ENCODE measurements at regions of chr11 and their contacts with region 1.

Region 1: DNA sequence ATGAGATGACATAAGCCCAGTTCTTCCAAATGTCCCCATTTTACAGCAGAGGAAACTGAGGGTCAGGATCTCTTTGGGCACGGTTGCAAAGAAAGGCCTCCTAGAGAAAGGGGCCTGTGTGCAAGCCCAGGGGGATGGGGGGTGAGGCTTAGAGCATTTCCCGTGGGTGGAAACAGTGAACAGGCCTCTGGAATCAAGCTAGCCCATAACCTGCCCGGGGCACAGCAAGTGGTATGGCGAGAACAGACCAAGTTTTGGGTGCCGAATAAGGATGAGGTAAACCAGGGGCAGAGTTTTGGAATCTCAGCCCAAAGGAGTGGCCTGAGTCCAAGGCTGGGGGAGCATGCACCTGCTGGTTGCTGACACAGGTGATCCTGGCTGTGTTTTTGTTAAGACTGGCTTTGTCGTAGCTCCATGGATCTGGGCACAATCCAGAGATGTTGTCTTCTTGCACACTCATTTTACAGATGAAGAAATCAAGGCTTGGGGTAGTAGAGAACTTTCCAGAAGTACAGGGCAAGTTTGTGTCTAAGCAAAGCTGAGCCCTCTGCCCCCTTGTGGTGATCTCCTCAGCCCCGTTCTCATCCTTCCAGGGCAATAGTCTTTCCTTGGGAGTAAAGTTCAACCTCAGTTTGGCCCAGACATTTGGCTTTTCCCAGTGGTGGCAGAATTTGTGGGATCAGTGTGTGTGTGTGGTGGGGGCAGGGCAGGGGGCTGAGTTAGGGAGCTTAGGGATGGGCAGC is 53.5 kb upstream of the MYEOV start:
- DNase-seq: no peak
- H3K4me3 Mint-ChIP-seq: no peak overlapping the region
- H3K27ac Mint-ChIP-seq: peak overlapping the region; percentile 21
- H3K4me1 Mint-ChIP-seq: peaks cover 28% of the 10 kb centered on the region
- H3K27me3 Mint-ChIP-seq: peaks cover 10% of the 10 kb centered on the region

Region 2: GRCh38 chr11:69101115-69101791 is 139.2 kb before region 1 on chr11:
- intact Hi-C with region 1: loop called (anchors 1 kb)
- DNase-seq: peak; percentile 92
- H3K4me3 Mint-ChIP-seq: no peak overlapping the region
- H3K27ac Mint-ChIP-seq: no peak overlapping the region
- H3K4me1 Mint-ChIP-seq: peaks cover 3% of the 10 kb centered on the region
- H3K27me3 Mint-ChIP-seq: no peaks in the 10 kb centered on the region

Region 3: DNA sequence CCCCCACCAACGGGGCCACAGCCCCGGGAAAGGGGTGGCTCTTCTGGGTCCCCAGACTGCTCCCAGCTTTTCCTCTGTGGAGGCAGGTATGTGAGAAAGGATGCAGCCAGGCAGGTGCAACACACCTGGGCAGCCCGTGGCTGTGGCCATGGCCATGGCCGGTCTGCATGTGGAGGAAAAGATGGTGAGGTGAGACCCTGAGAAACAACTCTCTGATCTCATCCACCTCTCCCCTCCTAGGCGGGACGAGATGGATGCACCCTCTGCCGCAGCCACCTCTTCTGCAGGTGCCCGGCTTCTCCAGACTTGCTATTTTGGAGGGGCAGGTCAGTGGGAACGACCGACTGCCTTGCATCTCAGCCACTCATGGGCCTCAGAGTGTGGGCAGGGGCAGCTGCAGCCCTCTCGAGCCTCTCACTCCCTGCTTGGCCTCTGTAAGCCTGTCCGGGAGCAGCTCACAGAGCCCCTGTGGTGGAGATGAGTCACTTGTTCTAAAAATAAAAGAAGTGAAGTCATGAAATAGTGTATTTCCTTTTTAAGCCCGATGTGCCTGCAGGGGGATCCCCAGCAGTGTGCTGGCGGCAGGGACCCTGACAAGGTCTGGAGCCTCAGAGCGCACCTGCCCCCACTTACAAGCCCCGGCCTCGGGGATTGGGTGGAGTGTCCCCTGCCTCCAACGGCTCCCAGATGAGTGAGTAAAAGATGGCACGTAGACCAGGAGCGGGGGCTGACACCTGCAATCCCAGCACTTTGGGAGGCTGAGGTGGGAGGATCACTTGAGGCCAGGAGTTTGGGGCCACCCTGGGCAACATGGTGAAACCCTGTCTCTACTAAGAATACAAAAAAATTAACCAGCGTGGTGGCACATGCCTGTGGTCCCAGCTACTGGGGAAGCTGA is 74.0 kb before region 1 on chr11:
- intact Hi-C with region 1: loop called (anchors 1 kb)
- DNase-seq: peak; percentile 78
- H3K4me3 Mint-ChIP-seq: peak overlapping the region; percentile 74
- H3K27ac Mint-ChIP-seq: peak overlapping the region; percentile 87
- H3K4me1 Mint-ChIP-seq: peaks cover 18% of the 10 kb centered on the region
- H3K27me3 Mint-ChIP-seq: peaks cover 6% of the 10 kb centered on the region

Region 4: DNA sequence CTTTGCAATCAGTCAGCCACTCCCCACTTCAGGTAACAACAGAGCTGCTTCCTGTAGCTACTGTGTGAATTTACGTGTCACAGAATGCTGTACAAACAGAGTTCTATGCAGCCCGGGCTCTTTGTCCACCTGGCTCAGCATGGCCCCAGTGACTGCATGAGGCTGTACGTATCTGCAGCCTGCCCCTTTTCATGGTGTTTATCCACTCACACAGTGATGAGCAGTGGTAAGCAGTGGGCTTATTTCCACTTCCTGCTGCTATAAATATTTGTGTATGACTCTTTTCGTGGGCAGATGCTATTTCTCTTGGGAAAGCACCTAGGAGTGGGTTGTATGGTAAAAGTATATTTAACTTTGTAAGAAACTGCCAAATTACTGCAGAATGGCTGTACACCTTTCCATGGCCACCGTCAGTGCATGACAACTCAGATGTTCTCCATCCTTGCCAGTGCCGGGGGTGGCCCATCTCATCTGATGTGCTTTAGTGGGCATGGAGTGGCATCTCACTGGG is 96.8 kb after region 1 on chr11:
- intact Hi-C with region 1: loop called (anchors 2 kb)
- DNase-seq: peak; percentile 79
- H3K4me3 Mint-ChIP-seq: peak overlapping the region; percentile 61
- H3K27ac Mint-ChIP-seq: peak overlapping the region; percentile 96
- H3K4me1 Mint-ChIP-seq: peaks cover 43% of the 10 kb centered on the region
- H3K27me3 Mint-ChIP-seq: peaks cover 4% of the 10 kb centered on the region

Region 5: DNA sequence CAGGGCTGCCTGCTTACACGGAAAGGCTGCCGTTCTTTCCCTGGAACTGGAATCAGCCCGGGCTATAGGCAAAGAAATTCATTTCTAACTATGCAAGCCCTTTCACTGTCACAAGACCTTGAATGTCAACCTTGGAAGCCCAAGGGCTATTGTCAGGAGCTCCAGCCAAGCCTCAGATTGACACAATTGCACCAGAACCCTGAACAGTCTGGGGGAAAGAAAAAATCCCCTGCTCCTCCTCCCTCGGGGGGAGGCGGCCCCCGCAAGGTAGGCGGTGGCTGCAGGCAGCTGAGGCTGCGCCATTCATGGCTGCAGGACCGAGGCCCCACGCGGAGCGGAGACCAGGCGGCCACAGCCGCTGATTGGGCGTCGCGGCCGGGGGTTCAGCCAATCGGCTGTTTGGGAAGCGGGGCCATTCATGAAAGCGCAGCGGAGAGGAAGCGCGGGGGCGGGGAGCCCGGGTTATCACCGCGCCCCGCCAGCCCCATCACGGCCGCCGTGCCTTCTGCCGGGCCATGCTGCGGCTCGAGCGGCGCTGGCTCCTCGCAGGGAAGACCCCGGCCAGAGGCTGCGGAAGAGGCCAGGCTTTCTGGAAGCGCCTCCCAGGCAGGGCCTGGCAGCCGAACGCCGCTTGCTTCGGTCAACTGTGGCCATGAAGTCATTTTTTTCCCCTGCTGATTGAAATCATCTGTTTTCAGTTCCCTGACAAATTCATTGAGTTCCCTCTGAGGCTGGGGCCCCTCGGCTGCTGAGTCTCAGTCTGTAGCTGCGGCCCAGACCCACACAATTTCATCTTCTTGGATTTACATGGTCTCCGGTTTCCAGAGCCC is 202.8 kb after region 1 on chr11:
- intact Hi-C with region 1: loop called (anchors 5 kb)
- DNase-seq: peak; percentile 92
- H3K4me3 Mint-ChIP-seq: peak overlapping the region; percentile 72
- H3K27ac Mint-ChIP-seq: peak overlapping the region; percentile 60
- H3K4me1 Mint-ChIP-seq: peaks cover 11% of the 10 kb centered on the region
- H3K27me3 Mint-ChIP-seq: peaks cover 13% of the 10 kb centered on the region

Measured in activated CD4-positive, alpha-beta T cell treated with anti-CD3 and anti-CD28 coated beads, Interleukin-2, amount 10 ng/mL, durations not matched to agents 24 days and 14 days (primary cell).